ENCODE measurements at regions of chr2 and their contacts with region 1.

Region 1: DNA sequence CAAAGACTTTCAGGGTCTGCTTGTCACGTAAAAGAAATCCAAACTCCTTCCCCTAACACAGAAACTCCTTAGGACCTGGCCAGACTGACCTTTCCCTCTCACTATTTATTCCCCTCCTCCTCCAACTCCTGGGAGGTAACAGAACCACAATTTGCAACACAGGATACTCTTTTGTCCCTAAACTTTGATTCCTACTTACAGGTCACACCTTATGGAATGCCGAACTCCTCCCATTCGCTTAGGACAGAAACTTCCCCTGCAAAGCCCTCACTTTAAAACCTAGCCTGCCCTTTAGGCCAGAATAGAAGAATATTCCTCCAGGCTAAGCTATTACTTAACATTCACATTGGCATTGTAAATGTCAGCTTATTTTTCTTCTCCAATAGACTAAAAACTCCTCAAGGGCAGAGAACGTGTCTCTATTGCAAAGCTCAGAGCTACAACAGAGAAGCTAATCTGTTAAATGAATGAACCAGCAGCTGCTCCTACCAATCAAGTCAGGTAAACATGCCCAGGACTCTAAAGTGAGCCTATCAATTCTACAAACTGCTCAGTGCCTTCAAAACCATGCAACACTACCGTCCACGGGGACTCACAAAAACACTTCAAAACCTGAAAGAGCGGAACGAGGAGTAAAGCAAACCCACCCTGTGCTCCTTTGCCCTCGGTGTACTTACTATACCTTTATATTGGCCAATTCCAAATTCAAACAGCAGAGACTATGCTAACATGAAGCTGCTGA is 6.1 kb downstream of the INO80D start:
- DNase-seq: peak; percentile 48
- ATAC-seq: peak; percentile 27
- H3K4me3 ChIP-seq: no peak overlapping the region; a peak in 2 of 6 replicates
- H3K27ac ChIP-seq: peak overlapping the region; percentile 44
- H3K4me1 ChIP-seq: peaks cover 77% of the 10 kb centered on the region
- H3K27me3 ChIP-seq: no peaks in the 10 kb centered on the region; a peak in 1 of 5 replicates
- CTCF ChIP-seq: no peak
- EP300 ChIP-seq: no peak
- POLR2A ChIP-seq: no peak
- RAD21 ChIP-seq: no peak

Region 2: DNA sequence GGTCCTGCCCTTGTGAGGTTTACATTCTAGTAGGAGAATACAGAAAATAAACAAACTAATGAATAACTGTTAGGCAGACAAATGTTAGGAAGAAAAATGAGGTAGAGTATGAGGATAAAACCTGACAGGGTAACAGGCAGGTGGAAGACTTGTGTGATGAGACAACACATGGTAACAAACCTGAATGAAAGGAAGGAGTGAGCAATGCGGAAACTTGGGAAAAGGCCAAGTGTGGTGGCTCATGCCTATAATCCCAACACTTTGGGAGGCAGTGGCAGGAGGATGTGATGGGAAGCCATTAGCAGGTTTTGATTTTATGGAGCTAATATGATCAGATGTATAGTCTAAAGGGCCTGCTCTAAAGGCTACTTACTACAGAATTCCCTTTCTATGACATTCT is 68.1 kb before region 1 on chr2:
- CTCF ChIA-PET with region 1: no interaction called
- POLR2A ChIA-PET with region 1: no interaction called
- in situ Hi-C with region 1: no loop called
- intact Hi-C with region 1: loop called (anchors 10 kb)
- DNase-seq: no peak
- ATAC-seq: no peak
- H3K4me3 ChIP-seq: no peak overlapping the region
- H3K27ac ChIP-seq: no peak overlapping the region
- H3K4me1 ChIP-seq: peaks cover 8% of the 10 kb centered on the region; the same call in 1 of the 2 replicates
- H3K27me3 ChIP-seq: no peaks in the 10 kb centered on the region
- CTCF ChIP-seq: no peak
- EP300 ChIP-seq: no peak
- POLR2A ChIP-seq: no peak
- RAD21 ChIP-seq: no peak

Region 3: GRCh38 chr2:206115026-206115578 is 35.2 kb after region 1 on chr2:
- CTCF ChIA-PET with region 1: no interaction called
- POLR2A ChIA-PET with region 1: interaction called, 4 read pairs
- in situ Hi-C with region 1: no loop called
- intact Hi-C with region 1: loop called (anchors 5 kb)
- DNase-seq: peak; percentile 20
- ATAC-seq: no peak
- H3K4me3 ChIP-seq: no peak overlapping the region
- H3K27ac ChIP-seq: no peak overlapping the region
- H3K4me1 ChIP-seq: peaks cover 8% of the 10 kb centered on the region
- H3K27me3 ChIP-seq: no peaks in the 10 kb centered on the region
- CTCF ChIP-seq: no peak
- EP300 ChIP-seq: no peak
- POLR2A ChIP-seq: no peak
- RAD21 ChIP-seq: no peak

Region 4: DNA sequence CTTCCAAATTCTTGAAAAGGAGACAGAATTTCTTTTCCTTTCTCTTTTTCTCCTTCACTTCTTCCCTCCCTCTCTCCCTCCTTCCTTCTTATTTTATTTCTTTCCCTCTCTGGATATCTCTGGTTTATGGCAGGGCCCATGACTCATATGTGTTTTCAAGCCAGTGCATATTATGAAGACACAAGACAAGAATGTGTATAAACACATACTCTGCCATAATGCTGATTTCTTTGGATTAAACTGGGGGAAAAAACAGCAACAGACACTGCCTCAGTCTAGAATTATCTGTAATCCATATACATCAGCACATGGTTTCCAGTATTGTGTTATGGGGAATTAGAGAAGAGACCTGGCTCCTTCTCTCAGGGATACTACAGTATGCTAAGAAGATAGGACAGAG is 776.6 kb after region 1 on chr2:
- CTCF ChIA-PET with region 1: no interaction called
- POLR2A ChIA-PET with region 1: no interaction called
- in situ Hi-C with region 1: no loop called
- intact Hi-C with region 1: no loop called
- DNase-seq: no peak
- ATAC-seq: no peak
- H3K4me3 ChIP-seq: no peak overlapping the region
- H3K27ac ChIP-seq: no peak overlapping the region
- H3K4me1 ChIP-seq: no peaks in the 10 kb centered on the region
- H3K27me3 ChIP-seq: no peaks in the 10 kb centered on the region; a peak in 1 of 5 replicates
- CTCF ChIP-seq: no peak
- EP300 ChIP-seq: no peak
- POLR2A ChIP-seq: no peak
- RAD21 ChIP-seq: no peak